ENCODE measurements at regions of chr16 and their contacts with region 1.

Region 1: DNA sequence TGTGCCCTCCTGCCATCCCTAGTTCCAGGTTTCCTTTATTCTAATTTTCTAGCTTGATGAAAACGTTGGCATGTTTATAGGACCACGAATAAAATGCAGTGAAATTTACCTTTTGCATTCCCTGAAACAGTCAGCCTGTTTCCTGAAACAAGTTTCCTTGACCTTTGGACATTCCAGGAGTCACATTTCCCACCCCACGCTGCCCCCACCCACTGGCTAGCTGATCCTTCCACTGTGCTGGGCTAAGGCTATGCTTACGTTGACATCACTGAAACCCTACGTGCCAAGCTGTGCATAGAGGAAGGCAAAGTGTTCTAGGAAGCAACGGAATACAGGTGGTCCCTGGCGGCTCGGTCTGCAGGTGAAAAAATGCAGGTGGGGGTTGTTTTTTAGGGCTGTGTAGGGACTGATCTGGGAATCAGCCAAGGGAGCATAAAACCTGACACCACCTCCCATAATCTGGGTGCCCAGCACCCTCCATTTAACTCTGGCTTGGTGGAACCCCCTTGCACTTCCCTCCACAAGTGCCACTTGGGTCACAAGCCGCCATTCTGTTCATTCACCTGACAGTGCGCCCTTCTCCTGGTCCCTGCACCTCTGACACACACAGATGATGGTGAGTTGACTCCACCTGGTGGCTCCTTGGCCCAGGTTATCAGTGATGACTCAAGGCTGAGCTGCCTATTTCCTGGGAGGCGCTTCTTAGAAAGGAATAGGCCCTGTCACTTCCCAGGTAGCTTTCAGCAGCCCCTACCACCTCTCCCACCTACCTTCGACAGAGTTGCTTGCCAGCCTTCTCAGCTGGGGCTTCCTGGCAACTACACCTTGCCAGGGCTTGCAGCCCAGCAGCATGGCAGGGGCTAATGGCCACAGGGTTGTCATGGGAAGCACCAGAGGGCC is 83.7 kb downstream of the N4BP1 start:
- DNase-seq: peak; percentile 81
- ATAC-seq: peak; percentile 95
- H3K4me3 ChIP-seq: no peak overlapping the region
- H3K27ac ChIP-seq: no peak overlapping the region
- H3K4me1 ChIP-seq: peaks cover 20% of the 10 kb centered on the region
- H3K27me3 ChIP-seq: no peaks in the 10 kb centered on the region
- CTCF ChIP-seq: peak; percentile 72

Region 2: DNA sequence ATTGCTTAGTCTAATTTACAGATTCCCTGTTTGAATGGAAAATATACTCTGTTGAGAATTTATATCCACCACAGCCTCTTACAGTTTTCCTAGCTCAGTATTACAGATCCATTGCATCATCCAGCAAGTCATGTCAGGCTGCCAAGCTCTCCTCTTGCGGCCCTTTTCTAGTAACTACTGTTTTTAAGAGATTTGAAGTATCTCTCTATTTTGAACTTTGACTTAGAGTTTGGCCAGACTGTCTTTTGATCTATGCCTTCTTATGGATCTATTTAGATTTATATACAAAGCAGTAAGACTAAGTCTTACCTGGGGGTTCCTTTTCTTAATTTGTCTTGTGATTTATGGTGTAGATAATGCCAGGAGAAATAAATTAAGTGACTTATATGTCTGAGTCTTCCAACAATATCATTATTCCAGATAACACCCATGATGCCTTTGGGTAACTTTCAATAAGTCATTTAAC is 225.9 kb before region 1 on chr16:
- CTCF ChIA-PET with region 1: no interaction called
- POLR2A ChIA-PET with region 1: no interaction called
- intact Hi-C with region 1: no loop called
- DNase-seq: no peak
- ATAC-seq: no peak; the same call in 1 of the 2 replicates
- H3K4me3 ChIP-seq: no peak overlapping the region
- H3K27ac ChIP-seq: no peak overlapping the region
- H3K4me1 ChIP-seq: peaks cover 8% of the 10 kb centered on the region
- H3K27me3 ChIP-seq: no peaks in the 10 kb centered on the region
- CTCF ChIP-seq: no peak

Region 3: GRCh38 chr16:48342591-48342990 is 183.7 kb before region 1 on chr16:
- CTCF ChIA-PET with region 1: no interaction called
- POLR2A ChIA-PET with region 1: no interaction called
- intact Hi-C with region 1: no loop called
- DNase-seq: no peak
- ATAC-seq: no peak
- H3K4me3 ChIP-seq: no peak overlapping the region
- H3K27ac ChIP-seq: no peak overlapping the region
- H3K4me1 ChIP-seq: no peaks in the 10 kb centered on the region
- H3K27me3 ChIP-seq: no peaks in the 10 kb centered on the region
- CTCF ChIP-seq: no peak

Region 4: DNA sequence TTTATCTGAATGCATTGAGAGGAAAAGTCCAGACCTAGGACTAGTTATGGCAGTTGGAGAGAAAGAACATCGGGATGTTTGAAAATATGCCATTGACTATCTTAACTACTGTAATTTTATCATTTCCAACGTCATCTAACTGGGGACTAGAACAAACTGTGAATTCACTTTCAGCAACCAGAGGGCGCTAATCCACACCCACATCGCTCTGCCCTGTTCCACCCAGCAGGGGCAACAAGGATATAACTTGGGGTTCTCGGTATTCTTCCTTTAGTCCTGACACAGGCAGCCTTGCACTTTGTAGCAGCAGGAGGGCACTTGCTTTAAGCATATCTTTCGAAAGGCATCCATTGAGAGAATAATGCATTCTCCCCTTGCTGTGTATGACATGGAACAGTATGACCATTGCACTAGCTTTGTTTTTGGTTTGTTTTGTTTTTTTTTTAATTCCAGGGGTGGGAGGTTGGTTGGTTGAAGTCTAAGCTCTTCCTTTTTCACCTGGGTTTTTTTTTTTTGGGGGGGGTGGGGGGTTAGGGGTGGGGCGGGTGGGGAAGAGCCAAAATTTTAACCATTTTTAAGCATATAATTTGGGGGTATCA is 172.6 kb before region 1 on chr16:
- CTCF ChIA-PET with region 1: interaction called, 4 read pairs
- POLR2A ChIA-PET with region 1: no interaction called
- intact Hi-C with region 1: loop called (anchors 2 kb)
- DNase-seq: peak; percentile 69
- ATAC-seq: peak; percentile 89
- H3K4me3 ChIP-seq: no peak overlapping the region
- H3K27ac ChIP-seq: no peak overlapping the region
- H3K4me1 ChIP-seq: no peaks in the 10 kb centered on the region
- H3K27me3 ChIP-seq: no peaks in the 10 kb centered on the region
- CTCF ChIP-seq: peak; percentile 84

Region 5: DNA sequence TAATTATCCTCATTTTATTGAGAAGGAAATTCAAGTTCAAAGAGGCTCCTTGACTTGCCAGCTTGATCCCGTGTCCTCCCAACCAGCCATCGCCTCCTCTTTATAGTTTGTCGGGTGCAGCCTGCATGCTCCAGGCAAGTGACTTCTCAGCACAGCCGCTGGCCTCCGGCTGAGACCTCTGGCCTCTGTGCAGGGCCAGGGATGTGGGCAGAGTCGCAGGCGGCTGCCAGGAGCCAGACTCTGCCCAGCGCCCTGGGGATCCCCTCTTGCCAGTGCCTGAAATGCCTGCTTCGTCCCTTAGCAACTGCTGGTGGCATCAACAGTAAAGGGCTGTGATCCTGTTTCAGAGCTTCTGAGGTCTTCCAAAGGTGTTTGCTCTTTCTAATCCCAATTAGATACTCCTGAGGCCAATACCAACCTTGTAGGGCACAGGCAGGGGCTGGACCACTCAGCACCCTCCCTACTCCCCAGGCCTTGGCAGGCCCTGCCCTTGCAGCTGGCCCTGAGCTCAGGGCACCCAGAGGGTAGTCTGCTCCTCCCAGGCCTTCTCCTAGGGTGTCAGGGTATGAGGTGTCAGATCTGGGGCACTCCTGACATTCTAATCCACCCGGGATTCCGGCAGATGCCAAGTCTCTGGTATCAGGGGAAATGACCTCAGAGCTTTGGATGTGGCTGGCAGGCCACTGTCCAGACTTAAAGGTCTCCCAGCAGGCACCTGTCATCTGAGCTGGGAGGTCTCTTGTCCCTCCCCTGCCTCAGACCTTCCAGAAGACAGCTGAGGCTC is 73.1 kb before region 1 on chr16:
- CTCF ChIA-PET with region 1: no interaction called
- POLR2A ChIA-PET with region 1: no interaction called
- intact Hi-C with region 1: loop called (anchors 10 kb)
- DNase-seq: no peak
- ATAC-seq: no peak
- H3K4me3 ChIP-seq: no peak overlapping the region
- H3K27ac ChIP-seq: no peak overlapping the region
- H3K4me1 ChIP-seq: peaks cover 6% of the 10 kb centered on the region
- H3K27me3 ChIP-seq: no peaks in the 10 kb centered on the region
- CTCF ChIP-seq: no peak

Measured in PC-3 (cell line).